Ascending aorta (tissue), 2 donors: ENCODE measurements at regions of chr15 and their contacts with region 1.

Region 1: GRCh38 chr15:77419836-77420609 is at the start of gene PEAK1:
- DNase-seq: peak; percentile 99 to 100
- H3K4me3 ChIP-seq: peak within 1 kb of the TSS; percentile 76 to 99
- H3K27ac ChIP-seq: peak within 1 kb of the TSS; percentile 91 to 97
- H3K4me1 ChIP-seq: peaks cover 0 to 20% of the 10 kb centered on the region in 2 donors
- H3K27me3 ChIP-seq: no peaks in the 10 kb centered on the region
- CTCF ChIP-seq: no peak
- total RNA-seq, gene PEAK1: 53.7 TPM

Region 2: GRCh38 chr15:76905013-76905839 is 514.8 kb before region 1 on chr15 and contains the start of gene SCAPER:
- intact Hi-C with region 1: loop called (anchors 2 kb)
- DNase-seq: peak; percentile 80 to 94
- H3K4me3 ChIP-seq: peak within 1 kb of the TSS; percentile 91 to 97
- H3K27ac ChIP-seq: peak within 1 kb of the TSS; percentile 93 to 94
- H3K4me1 ChIP-seq: peaks cover 0 to 14% of the 10 kb centered on the region in 2 donors
- H3K27me3 ChIP-seq: no peaks in the 10 kb centered on the region
- CTCF ChIP-seq: peak in 1 of 3 experiments; percentile 7
- total RNA-seq, gene SCAPER: 78.1 TPM

Region 3: GRCh38 chr15:77455696-77456321 is 35.8 kb after region 1 on chr15:
- intact Hi-C with region 1: loop called (anchors 2 kb)
- DNase-seq: no peak
- H3K4me3 ChIP-seq: no peak overlapping the region
- H3K27ac ChIP-seq: peak overlapping the region; percentile 68 to 77
- H3K4me1 ChIP-seq: peaks cover 0 to 27% of the 10 kb centered on the region in 2 donors
- H3K27me3 ChIP-seq: no peaks in the 10 kb centered on the region
- CTCF ChIP-seq: no peak

Region 4: GRCh38 chr15:77482570-77482969 is 62.5 kb after region 1 on chr15:
- intact Hi-C with region 1: no loop called
- DNase-seq: no peak
- H3K4me3 ChIP-seq: no peak overlapping the region
- H3K27ac ChIP-seq: no peak overlapping the region
- H3K4me1 ChIP-seq: peaks cover 3 to 4% of the 10 kb centered on the region in 2 donors
- H3K27me3 ChIP-seq: no peaks in the 10 kb centered on the region
- CTCF ChIP-seq: no peak